ENCODE measurements at regions of chr7 and their contacts with region 1.

Region 1: DNA sequence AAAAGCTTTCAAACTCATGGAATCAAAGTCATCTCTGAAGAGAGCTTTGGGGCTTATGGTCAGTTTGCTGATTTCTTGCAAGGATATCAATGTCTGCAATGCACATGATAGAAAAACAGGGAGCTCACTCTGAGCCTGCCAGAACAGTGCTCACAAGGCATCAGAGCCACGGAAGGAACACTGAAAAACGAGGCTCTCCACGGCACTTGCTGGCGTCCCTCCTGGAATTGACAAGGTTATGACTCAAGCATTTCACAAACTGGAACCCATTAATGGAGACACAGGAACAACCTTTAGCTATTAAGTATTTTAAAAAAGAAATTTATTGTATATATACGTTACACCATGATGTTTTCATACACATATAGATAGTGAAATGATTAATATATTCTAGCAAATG is 266.3 kb downstream of the KCND2 start:
- DNase-seq: no peak
- ATAC-seq: no peak
- H3K4me3 ChIP-seq: no peak overlapping the region
- H3K27ac ChIP-seq: no peak overlapping the region
- H3K4me1 ChIP-seq: no peaks in the 10 kb centered on the region
- H3K27me3 ChIP-seq: no peaks in the 10 kb centered on the region
- CTCF ChIP-seq: no peak
- EP300 ChIP-seq: no peak
- POLR2A ChIP-seq: no peak
- RAD21 ChIP-seq: no peak

Region 2: GRCh38 chr7:120526902-120527509 is 12.3 kb before region 1 on chr7:
- CTCF ChIA-PET with region 1: interaction called, 11 read pairs
- POLR2A ChIA-PET with region 1: interaction called, 3 read pairs
- RAD21 ChIA-PET with region 1: no interaction called
- SMC1A ChIA-PET with region 1: interaction called, 6 read pairs
- in situ Hi-C with region 1: no loop called
- intact Hi-C with region 1: no loop called
- DNase-seq: no peak
- ATAC-seq: no peak
- H3K4me3 ChIP-seq: no peak overlapping the region
- H3K27ac ChIP-seq: no peak overlapping the region
- H3K4me1 ChIP-seq: no peaks in the 10 kb centered on the region
- H3K27me3 ChIP-seq: no peaks in the 10 kb centered on the region
- CTCF ChIP-seq: no peak
- EP300 ChIP-seq: no peak
- POLR2A ChIP-seq: no peak
- RAD21 ChIP-seq: no peak

Measured in GM12878 (cell line).